ENCODE measurements at regions of chr13 and their contacts with region 1.

Region 1: GRCh38 chr13:54492995-54493394 is 1464.4 kb downstream of the OLFM4 start:
- DNase-seq: no peak
- ATAC-seq: no peak
- H3K4me3 ChIP-seq: no peak overlapping the region
- H3K27ac ChIP-seq: no peak overlapping the region
- H3K4me1 ChIP-seq: no peaks in the 10 kb centered on the region
- H3K27me3 ChIP-seq: no peaks in the 10 kb centered on the region
- CTCF ChIP-seq: no peak
- EP300 ChIP-seq: no peak
- POLR2A ChIP-seq: no peak
- RAD21 ChIP-seq: no peak

Region 2: DNA sequence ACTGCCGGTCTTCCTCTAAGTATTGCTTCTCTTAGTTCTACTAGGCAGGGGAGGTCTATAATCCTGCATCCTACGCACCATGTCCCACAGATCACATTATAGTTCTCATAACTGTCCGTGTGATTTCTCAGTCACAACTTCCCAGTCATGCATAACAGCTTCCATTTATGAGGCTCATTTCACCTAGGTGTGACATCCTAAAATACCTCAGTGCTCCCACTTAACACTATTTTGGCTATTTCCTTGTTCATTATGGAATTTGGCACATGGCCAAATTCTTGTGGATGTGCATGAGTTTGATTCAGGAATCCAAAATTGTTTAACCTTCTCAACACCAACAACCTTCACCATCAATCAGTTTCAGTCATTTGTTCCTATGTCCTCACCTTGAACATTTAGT is 474.5 kb before region 1 on chr13:
- CTCF ChIA-PET with region 1: no interaction called
- POLR2A ChIA-PET with region 1: no interaction called
- in situ Hi-C with region 1: no loop called
- intact Hi-C with region 1: loop called (anchors 5 kb)
- DNase-seq: no peak
- ATAC-seq: no peak
- H3K4me3 ChIP-seq: no peak overlapping the region
- H3K27ac ChIP-seq: no peak overlapping the region
- H3K4me1 ChIP-seq: no peaks in the 10 kb centered on the region
- H3K27me3 ChIP-seq: no peaks in the 10 kb centered on the region
- CTCF ChIP-seq: no peak
- EP300 ChIP-seq: no peak
- POLR2A ChIP-seq: no peak
- RAD21 ChIP-seq: no peak

Region 3: GRCh38 chr13:54261856-54262255 is 231.1 kb before region 1 on chr13:
- CTCF ChIA-PET with region 1: no interaction called
- POLR2A ChIA-PET with region 1: no interaction called
- in situ Hi-C with region 1: no loop called
- intact Hi-C with region 1: no loop called
- DNase-seq: no peak
- ATAC-seq: no peak
- H3K4me3 ChIP-seq: no peak overlapping the region
- H3K27ac ChIP-seq: no peak overlapping the region
- H3K4me1 ChIP-seq: no peaks in the 10 kb centered on the region
- H3K27me3 ChIP-seq: no peaks in the 10 kb centered on the region
- CTCF ChIP-seq: no peak
- EP300 ChIP-seq: no peak
- POLR2A ChIP-seq: no peak
- RAD21 ChIP-seq: no peak

Region 4: DNA sequence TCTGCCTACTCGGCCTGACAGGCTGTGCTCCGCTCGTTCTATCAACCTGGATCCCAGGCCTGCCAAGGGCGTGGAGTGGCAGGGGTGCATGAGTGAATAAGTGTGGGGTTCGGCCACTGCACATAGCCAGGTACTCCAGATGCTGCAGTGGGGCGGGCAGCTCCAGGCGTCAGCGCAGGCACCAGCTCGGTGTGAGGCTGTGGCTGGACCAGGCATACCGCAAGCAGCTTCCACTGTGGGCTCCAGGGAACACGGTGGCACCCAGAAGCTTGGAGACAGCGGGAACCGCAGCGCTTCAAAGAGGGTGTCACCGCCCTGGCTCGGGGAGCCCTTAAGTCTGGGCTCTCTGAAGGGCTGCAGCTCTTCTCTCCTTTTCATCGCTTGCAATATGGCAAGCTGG is 165.8 kb after region 1 on chr13:
- CTCF ChIA-PET with region 1: no interaction called
- POLR2A ChIA-PET with region 1: no interaction called
- in situ Hi-C with region 1: no loop called
- intact Hi-C with region 1: no loop called
- DNase-seq: no peak
- ATAC-seq: no peak
- H3K4me3 ChIP-seq: no peak overlapping the region
- H3K27ac ChIP-seq: no peak overlapping the region
- H3K4me1 ChIP-seq: no peaks in the 10 kb centered on the region
- H3K27me3 ChIP-seq: no peaks in the 10 kb centered on the region
- CTCF ChIP-seq: no peak
- EP300 ChIP-seq: no peak
- POLR2A ChIP-seq: no peak
- RAD21 ChIP-seq: no peak

Measured in HepG2 (cell line).